ENCODE measurements at regions of chr6 and their contacts with region 1.

Region 1: GRCh38 chr6:13574149-13574570 is 241 bp upstream of the SIRT5 start:
- DNase-seq: peak; percentile 95
- ATAC-seq: peak; percentile 84
- H3K4me3 Mint-ChIP-seq: peak overlapping the region; percentile 100
- H3K27ac Mint-ChIP-seq: peak overlapping the region; percentile 99
- H3K4me1 Mint-ChIP-seq: peaks cover 23% of the 10 kb centered on the region
- H3K27me3 Mint-ChIP-seq: no peaks in the 10 kb centered on the region

Region 2: DNA sequence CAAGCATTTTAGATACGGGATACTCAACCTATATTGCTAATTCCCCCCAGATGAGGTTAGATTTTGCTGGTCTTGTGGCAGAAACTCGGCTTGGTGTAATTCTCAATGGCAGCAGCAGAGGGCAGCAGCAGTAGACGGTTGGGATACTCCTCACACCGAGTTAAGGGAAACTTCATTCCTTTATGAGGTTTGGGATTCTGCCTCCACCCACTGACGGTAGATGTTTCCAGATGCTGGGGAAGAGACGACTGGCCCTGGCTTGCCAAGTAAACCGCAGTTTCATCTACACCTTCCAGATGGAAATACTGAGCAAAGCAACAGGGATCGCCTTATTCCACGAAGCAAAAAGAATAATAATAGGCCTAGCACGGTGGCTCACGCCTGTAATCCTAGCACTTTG is 237.6 kb before region 1 on chr6:
- POLR2A ChIA-PET with region 1: interaction called, 10 read pairs
- DNase-seq: peak; percentile 81
- ATAC-seq: peak; percentile 63
- H3K4me3 Mint-ChIP-seq: no peak overlapping the region
- H3K27ac Mint-ChIP-seq: peak overlapping the region; percentile 3
- H3K4me1 Mint-ChIP-seq: peaks cover 29% of the 10 kb centered on the region
- H3K27me3 Mint-ChIP-seq: peaks cover 6% of the 10 kb centered on the region

Region 3: GRCh38 chr6:13457577-13457976 is 116.6 kb before region 1 on chr6:
- POLR2A ChIA-PET with region 1: interaction called, 11 read pairs
- DNase-seq: no peak
- ATAC-seq: no peak
- H3K4me3 Mint-ChIP-seq: no peak overlapping the region
- H3K27ac Mint-ChIP-seq: no peak overlapping the region
- H3K4me1 Mint-ChIP-seq: peaks cover 47% of the 10 kb centered on the region
- H3K27me3 Mint-ChIP-seq: no peaks in the 10 kb centered on the region

Region 4: GRCh38 chr6:13487122-13488014 is 86.8 kb before region 1 on chr6 and contains the start of gene GFOD1:
- POLR2A ChIA-PET with region 1: interaction called, 23 read pairs
- DNase-seq: peak; percentile 87
- ATAC-seq: peak; percentile 83
- H3K4me3 Mint-ChIP-seq: peak within 1 kb of the TSS; percentile 94
- H3K27ac Mint-ChIP-seq: peak within 1 kb of the TSS; percentile 78
- H3K4me1 Mint-ChIP-seq: peaks cover 40% of the 10 kb centered on the region
- H3K27me3 Mint-ChIP-seq: peaks cover 9% of the 10 kb centered on the region
- total RNA-seq, gene GFOD1: 5.2 to 5.9 TPM

Region 5: DNA sequence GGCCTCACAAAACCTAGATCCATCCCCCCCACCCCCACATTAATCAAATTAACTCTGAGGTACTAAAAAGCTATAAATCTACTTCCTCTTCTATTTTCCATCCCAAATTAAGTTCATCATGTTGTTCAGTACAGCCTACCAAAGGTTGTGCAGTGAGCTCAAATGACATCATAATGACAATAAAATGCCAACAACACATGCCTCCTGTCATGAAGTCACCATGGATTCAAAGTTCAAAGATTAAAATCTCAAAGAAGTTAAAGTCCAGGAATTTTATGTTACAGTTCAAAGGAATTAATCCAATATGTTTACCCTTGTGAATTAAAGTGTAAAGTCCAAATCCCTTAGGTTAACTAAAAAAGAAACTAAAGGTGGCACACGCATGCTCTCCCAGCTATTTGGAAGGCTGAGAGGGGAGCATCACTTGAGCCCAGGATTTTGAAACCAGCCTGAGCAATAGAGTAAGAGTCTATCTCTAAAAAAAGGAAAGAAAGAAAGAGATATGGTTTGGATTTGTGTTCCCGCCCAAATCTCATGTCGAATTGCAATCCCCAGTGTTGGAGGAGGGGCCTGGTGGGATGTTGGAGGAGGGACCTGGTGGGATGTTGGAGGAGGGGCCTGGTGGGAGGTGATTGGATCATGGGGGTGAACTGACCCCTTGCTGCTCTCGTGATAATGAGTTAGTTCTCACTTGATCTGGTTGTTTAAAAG is 25.5 kb before region 1 on chr6:
- POLR2A ChIA-PET with region 1: no interaction called
- DNase-seq: no peak
- ATAC-seq: no peak
- H3K4me3 Mint-ChIP-seq: no peak overlapping the region
- H3K27ac Mint-ChIP-seq: peak overlapping the region; percentile 47
- H3K4me1 Mint-ChIP-seq: no peaks in the 10 kb centered on the region
- H3K27me3 Mint-ChIP-seq: peaks cover 12% of the 10 kb centered on the region

Region 6: DNA sequence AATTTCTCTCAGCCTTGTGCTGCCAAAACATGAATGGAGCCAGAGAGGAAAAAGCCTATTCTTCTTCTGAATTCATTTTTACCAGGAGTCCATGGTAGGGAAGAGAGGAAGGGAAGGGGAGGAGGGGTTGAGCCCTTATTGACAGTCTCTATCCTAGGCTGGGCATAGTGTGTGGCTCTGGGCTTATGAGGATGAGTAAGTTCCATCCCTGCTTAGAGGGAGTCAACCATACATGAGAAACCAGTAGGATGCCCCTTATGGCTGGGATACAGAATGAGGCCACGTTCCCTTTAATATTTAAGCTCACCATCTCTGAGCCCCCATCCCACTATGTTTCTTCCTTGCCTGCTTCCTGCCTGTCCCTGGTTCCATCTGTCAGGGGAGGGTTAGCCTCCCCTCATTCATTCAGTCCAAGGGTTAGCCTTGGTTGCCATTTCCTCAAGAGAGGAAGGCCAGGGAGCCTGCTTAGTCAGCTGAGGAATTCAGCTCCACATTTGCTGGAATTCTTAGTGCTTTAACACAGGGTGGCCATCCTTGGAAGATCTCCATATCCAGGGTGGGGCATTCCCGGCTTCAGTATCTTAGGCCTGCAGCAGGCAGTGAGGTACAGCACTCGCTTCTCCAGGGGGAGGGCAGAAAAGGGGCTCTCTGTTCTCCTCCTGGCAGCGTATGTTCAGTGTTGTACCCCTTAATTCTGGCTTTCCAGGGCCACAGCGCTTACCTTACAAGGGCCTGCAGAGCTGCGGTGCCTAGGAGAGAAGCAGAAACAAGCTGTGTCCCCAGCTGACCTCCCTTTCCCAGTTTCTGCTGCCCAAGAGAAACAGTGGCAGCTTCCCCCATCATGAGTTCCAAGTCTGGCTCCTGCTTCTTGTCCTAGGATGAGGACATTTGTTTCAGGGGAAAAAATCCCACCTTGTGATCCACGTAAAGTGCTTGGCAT is 12.7 kb after region 1 on chr6:
- POLR2A ChIA-PET with region 1: no interaction called
- DNase-seq: no peak
- ATAC-seq: no peak
- H3K4me3 Mint-ChIP-seq: no peak overlapping the region
- H3K27ac Mint-ChIP-seq: no peak overlapping the region
- H3K4me1 Mint-ChIP-seq: no peaks in the 10 kb centered on the region
- H3K27me3 Mint-ChIP-seq: no peaks in the 10 kb centered on the region

Region 7: DNA sequence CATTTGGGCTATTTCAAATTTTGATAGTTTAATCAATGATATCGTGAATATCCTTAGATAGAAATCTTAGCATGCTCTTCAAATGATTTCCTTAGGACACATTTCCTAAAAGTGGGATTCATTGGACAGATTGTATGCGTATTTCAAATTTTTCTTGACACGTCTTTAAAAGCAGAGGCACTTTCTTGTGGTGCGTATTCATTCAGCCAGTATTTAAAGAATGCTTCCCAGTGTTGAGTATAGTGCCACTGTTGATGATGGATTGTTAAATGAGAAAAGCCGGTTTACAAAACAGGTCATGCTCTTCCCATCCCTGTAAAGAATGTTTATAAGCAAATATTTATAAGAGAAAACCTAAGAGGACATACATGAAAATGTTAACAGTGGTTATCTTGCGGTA is 25.9 kb after region 1 on chr6:
- POLR2A ChIA-PET with region 1: no interaction called
- DNase-seq: no peak
- ATAC-seq: no peak
- H3K4me3 Mint-ChIP-seq: no peak overlapping the region
- H3K27ac Mint-ChIP-seq: no peak overlapping the region
- H3K4me1 Mint-ChIP-seq: peaks cover 5% of the 10 kb centered on the region
- H3K27me3 Mint-ChIP-seq: no peaks in the 10 kb centered on the region

Region 8: DNA sequence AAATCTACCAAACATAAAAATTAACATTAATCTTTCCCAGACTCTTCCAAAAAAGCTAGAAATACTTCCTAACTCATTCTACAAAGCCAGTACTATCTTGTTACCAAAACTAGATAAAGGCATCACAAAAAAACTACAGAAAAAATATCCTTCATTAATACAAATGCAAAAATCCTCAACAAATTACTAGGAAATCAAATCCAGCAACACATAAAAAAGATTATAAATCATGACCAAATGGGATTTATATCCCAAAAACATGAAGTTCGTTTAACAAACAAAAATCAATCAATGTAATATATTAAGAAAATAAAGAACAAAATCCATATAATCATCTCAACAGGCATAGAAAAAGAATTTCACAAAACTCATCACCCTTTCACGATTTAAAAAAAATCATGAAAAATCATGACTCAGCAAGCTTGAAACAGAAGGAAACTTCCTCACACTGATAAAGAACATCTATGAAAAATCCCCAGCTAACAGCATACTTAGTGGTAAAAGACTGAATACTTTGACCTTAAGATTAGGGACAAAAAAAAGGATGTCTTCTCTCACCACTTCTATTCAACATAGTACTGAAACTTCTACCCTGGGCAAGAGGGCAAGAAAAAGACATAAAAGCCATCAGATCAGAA is 94.2 kb after region 1 on chr6:
- POLR2A ChIA-PET with region 1: no interaction called
- DNase-seq: no peak
- ATAC-seq: peak; percentile 33
- H3K4me3 Mint-ChIP-seq: peak overlapping the region; percentile 14
- H3K27ac Mint-ChIP-seq: no peak overlapping the region
- H3K4me1 Mint-ChIP-seq: peaks cover 54% of the 10 kb centered on the region
- H3K27me3 Mint-ChIP-seq: no peaks in the 10 kb centered on the region

Measured in activated naive CD8-positive, alpha-beta T cell treated with anti-CD3 and anti-CD28 coated beads, Interleukin-2, amount 10 ng/mL, durations not matched to agents 7 days and 5 days (primary cell).